MCF 10A (cell line): ENCODE measurements at regions of chr12 and their contacts with region 1.

Region 1: DNA sequence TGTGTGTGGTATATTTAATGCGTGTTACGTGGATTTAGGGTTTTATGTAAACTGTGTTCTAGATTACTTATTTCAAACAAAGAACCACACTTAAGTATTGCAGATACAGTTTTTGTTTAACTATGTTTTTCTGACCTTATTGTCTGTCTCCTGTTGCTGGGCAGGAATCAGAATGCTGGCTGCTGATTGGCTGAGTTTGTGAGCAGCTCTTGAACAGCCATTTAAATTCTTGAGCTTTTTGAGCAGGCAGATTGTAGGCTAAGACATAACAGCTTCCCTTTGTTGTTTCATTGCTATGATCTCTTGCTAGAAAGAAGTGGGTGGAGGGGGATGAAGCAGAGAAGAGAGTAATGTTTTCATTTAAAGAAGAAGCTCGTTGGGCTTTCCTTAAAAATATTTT is 52.2 kb downstream of the ATF7IP start:
- DNase-seq: peak; percentile 65
- H3K4me3 Mint-ChIP-seq: no peak overlapping the region
- H3K27ac Mint-ChIP-seq: peak overlapping the region; percentile 59
- H3K4me1 Mint-ChIP-seq: no peaks in the 10 kb centered on the region
- H3K27me3 Mint-ChIP-seq: no peaks in the 10 kb centered on the region
- CTCF ChIP-seq: no peak

Region 2: GRCh38 chr12:14403711-14404196 is 14.0 kb before region 1 on chr12:
- CTCF ChIA-PET with region 1: interaction called, 10 read pairs
- POLR2A ChIA-PET with region 1: interaction called, 7 read pairs
- intact Hi-C with region 1: no loop called
- DNase-seq: peak; percentile 69
- H3K4me3 Mint-ChIP-seq: peak overlapping the region; percentile 28
- H3K27ac Mint-ChIP-seq: peak overlapping the region; percentile 91
- H3K4me1 Mint-ChIP-seq: peaks cover 27% of the 10 kb centered on the region
- H3K27me3 Mint-ChIP-seq: no peaks in the 10 kb centered on the region
- CTCF ChIP-seq: no peak

Region 3: GRCh38 chr12:14473707-14474287 is 56.1 kb after region 1 on chr12:
- CTCF ChIA-PET with region 1: no interaction called
- POLR2A ChIA-PET with region 1: no interaction called
- intact Hi-C with region 1: no loop called
- DNase-seq: peak; percentile 31
- H3K4me3 Mint-ChIP-seq: no peak overlapping the region
- H3K27ac Mint-ChIP-seq: no peak overlapping the region
- H3K4me1 Mint-ChIP-seq: no peaks in the 10 kb centered on the region
- H3K27me3 Mint-ChIP-seq: no peaks in the 10 kb centered on the region
- CTCF ChIP-seq: no peak